ENCODE measurements at regions of chr21 and their contacts with region 1.

Region 1: GRCh38 chr21:44817506-44817880 is 369 bp downstream of the SUMO3 start:
- DNase-seq: peak; percentile 90 to 94
- H3K4me3 ChIP-seq: peak overlapping the region; percentile 60 to 92
- H3K27ac ChIP-seq: peak overlapping the region; percentile 91 to 96
- H3K4me1 ChIP-seq: peaks cover 0 to 9% of the 10 kb centered on the region in 2 donors
- H3K27me3 ChIP-seq: no peaks in the 10 kb centered on the region
- CTCF ChIP-seq: no peak
- POLR2A ChIP-seq: no peak

Region 2: DNA sequence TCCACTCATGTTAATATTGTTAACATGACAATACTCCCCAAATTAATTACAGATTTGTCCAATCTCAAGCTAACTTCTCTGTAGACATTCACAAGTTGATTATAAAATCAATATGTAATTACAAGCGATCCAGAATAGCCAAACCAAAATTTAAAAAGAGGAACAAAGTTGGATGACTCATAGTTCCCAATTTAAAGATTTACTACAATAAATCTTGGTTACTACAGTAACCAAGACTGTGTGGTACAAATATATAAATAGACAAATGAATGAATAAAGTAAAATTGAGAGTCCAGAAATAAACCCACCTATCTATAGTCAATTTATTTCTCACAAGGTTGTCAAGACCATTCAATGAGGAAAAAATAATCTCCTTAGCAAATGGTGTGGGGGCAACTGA is 251.1 kb before region 1 on chr21:
- intact Hi-C with region 1: no loop called
- DNase-seq: no peak
- H3K4me3 ChIP-seq: no peak overlapping the region
- H3K27ac ChIP-seq: no peak overlapping the region
- H3K4me1 ChIP-seq: no peaks in the 10 kb centered on the region
- H3K27me3 ChIP-seq: no peaks in the 10 kb centered on the region
- CTCF ChIP-seq: no peak
- POLR2A ChIP-seq: no peak

Region 3: DNA sequence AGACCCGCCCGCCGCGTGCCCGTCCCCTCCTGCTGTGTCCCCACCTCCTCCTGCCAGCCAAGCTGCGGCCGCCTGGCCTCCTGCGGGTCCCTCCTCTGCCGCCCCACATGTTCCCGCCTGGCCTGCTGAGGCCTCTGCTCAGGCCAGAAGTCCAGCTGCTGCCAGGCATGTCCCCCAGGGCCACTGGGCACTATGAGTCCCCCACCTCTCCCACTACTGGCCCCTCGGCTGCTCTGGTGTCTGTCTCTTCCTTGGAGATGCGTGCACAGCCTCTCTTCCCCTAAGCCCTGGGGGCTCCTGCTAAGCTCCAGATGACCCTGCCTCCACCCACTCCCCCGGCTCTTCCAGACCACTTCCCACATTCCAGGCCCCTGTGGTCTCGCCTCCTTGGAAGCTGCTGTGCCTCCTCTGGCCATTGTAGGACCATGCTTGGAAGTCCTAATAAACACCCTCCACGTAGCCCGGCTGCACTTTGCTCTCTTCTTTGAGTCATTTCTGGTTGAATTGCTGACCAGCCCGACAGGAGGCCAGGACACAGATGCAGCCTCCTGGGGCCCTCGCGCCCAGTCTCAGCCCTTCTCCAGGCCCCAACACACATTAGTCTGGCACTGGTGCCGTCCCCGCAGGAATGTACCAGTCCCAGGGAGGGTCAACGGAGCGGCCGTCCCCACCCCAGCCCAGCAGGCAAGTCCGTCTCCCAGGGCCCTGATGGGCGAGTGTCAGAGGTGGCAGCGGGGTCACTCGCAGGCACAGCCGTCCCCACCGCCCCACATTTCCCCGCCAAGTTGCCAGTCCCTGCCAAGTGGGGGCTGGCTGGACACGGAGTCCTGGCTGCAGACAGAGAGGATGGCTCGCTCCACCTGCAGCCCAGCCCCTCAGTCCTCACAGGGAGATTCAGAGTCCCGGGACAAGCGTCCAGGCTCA is 119.4 kb before region 1 on chr21:
- intact Hi-C with region 1: no loop called
- DNase-seq: no peak
- H3K4me3 ChIP-seq: no peak overlapping the region
- H3K27ac ChIP-seq: no peak overlapping the region
- H3K4me1 ChIP-seq: no peaks in the 10 kb centered on the region
- H3K27me3 ChIP-seq: peaks cover 0 to 7% of the 10 kb centered on the region in 2 donors
- CTCF ChIP-seq: no peak
- POLR2A ChIP-seq: no peak

Region 4: GRCh38 chr21:44765231-44766013 is 52.1 kb before region 1 on chr21:
- intact Hi-C with region 1: no loop called
- DNase-seq: no peak
- H3K4me3 ChIP-seq: no peak overlapping the region
- H3K27ac ChIP-seq: no peak overlapping the region
- H3K4me1 ChIP-seq: no peaks in the 10 kb centered on the region
- H3K27me3 ChIP-seq: no peaks in the 10 kb centered on the region
- CTCF ChIP-seq: no peak
- POLR2A ChIP-seq: no peak

Region 5: DNA sequence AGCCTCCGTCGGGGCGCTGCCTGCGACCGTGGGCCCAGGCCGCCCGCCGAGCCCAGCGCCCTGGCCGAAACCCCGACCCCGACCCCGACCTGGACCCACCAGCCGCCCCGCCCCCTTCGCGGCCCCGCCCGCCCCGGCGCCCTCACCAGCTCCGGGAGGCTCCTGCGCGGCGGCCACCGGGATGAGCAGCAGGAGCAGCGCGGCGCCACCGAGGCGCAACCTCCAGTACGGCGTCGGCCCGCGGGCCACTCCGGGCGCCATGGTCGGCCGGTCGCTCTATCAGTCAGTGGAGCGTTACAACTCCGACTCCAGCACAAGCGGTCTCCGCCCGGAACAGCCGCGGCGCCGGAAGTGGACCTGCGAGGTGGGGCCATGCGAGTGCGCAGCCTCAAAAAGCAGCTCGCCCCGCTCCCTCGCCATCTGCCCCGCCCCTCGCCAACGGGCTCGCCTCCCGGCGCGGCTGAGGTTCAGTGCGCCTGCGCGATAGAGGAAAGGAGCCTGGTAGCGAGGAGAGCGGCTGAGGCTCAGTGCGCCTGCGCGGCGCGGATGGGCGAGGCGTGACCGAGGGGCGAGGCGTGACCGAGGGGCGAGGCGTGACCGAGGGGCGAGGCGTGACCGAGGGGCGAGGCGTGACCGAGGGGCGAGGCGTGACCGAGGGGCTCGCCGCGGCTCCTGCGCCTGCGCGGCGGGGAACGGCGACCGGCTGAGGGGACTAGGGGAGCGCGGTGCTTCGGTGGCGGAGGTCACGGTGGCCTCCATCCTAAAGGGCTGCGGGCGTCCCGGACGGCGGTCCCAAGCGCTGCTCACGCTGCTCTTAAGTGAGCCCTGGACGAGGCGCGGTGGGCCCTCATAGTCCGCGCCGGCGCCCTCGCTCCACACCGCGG is 56.1 kb after region 1 on chr21 and contains the start of gene PTTG1IP:
- intact Hi-C with region 1: loop called (anchors 5 kb)
- DNase-seq: peak; percentile 98 to 100
- H3K4me3 ChIP-seq: peak within 1 kb of the TSS; percentile 66 to 90
- H3K27ac ChIP-seq: peak within 1 kb of the TSS; percentile 87 to 89
- H3K4me1 ChIP-seq: peaks cover 15 to 31% of the 10 kb centered on the region in 2 donors
- H3K27me3 ChIP-seq: no peaks in the 10 kb centered on the region
- CTCF ChIP-seq: peak in 1 of 4 experiments; percentile 16
- POLR2A ChIP-seq: peak; percentile 70 to 81
- total RNA-seq, gene PTTG1IP: 108 to 202 (median 146) TPM